ENCODE measurements at regions of chr3 and their contacts with region 1.

Region 1: GRCh38 chr3:9302425-9303181 is 53.2 kb upstream of the SRGAP3 start:
- DNase-seq: peak; percentile 52 to 88 (median 75)
- ATAC-seq: peak; percentile 92 to 98 (median 94)
- H3K4me3 ChIP-seq: peak overlapping the region; percentile 23 to 26
- H3K4me3 Mint-ChIP-seq: peak overlapping the region; percentile 21 to 62 (median 51)
- H3K27ac ChIP-seq: no peak overlapping the region
- H3K27ac Mint-ChIP-seq: no peak overlapping the region
- H3K4me1 ChIP-seq: peaks cover 0 to 7% of the 10 kb centered on the region in 2 experiments
- H3K4me1 Mint-ChIP-seq: peaks cover 6 to 10% (median 8%) of the 10 kb centered on the region in 3 donors
- H3K27me3 ChIP-seq: peaks cover 0 to 10% of the 10 kb centered on the region in 2 experiments
- H3K27me3 Mint-ChIP-seq: peaks cover 15 to 19% of the 10 kb centered on the region in 2 donors

Region 2: DNA sequence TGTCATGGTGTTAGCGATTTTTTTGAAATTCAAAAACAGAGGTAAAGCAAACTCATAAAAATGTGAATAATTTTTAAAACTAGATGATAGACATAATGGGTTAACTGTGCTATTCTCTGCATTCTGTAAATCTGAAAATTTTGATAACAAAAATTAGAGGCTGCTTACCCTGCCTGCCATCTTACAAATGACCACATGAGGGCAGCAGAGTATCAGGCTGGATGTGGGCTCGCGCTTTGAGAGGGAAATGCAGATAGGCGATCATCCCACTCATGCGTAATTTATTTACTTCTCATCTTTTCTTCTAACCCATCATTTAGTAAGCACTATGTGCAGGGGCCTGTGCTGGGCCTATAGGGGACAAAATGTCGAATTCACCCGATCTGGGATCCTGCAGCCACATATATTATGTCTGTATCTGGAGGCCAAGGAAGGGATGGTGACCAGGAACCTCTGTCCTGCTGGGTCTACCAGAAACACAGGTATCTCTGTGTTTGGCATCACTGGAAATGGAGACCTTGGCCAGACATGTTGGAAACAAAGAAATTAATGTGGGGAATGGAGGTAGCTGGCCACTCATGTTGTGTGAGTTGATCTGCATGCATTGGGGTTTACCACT is 331.5 kb before region 1 on chr3:
- CTCF ChIA-PET with region 1: interaction called, 31 to 52 read pairs
- POLR2A ChIA-PET with region 1: interaction called in 1 of 2 experiments, 3 read pairs
- DNase-seq: peak; percentile 38 to 87 (median 64)
- ATAC-seq: peak; percentile 76 to 87 (median 84)
- H3K4me3 ChIP-seq: no peak overlapping the region
- H3K4me3 Mint-ChIP-seq: no peak overlapping the region
- H3K27ac ChIP-seq: no peak overlapping the region
- H3K27ac Mint-ChIP-seq: no peak overlapping the region
- H3K4me1 ChIP-seq: peaks cover 0 to 4% of the 10 kb centered on the region in 2 experiments
- H3K4me1 Mint-ChIP-seq: peaks cover 2 to 4% (median 4%) of the 10 kb centered on the region in 3 donors
- H3K27me3 ChIP-seq: peaks cover 0 to 21% of the 10 kb centered on the region in 2 experiments
- H3K27me3 Mint-ChIP-seq: peaks cover 10 to 20% of the 10 kb centered on the region in 2 donors

Region 3: GRCh38 chr3:8987645-8988383 is 314.8 kb before region 1 on chr3:
- CTCF ChIA-PET with region 1: interaction called, 8 to 21 read pairs
- POLR2A ChIA-PET with region 1: no interaction called
- DNase-seq: peak in 32 of 35 experiments; percentile 21 to 75 (median 50)
- ATAC-seq: peak in 3 of 4 experiments; percentile 83 to 90 (median 84)
- H3K4me3 ChIP-seq: no peak overlapping the region
- H3K4me3 Mint-ChIP-seq: peak overlapping the region in 2 of 3 donors; percentile 17 to 18
- H3K27ac ChIP-seq: no peak overlapping the region
- H3K27ac Mint-ChIP-seq: no peak overlapping the region
- H3K4me1 ChIP-seq: peaks cover 0 to 3% of the 10 kb centered on the region in 2 experiments
- H3K4me1 Mint-ChIP-seq: peaks cover 0 to 4% (median 1%) of the 10 kb centered on the region in 3 donors
- H3K27me3 ChIP-seq: peaks cover 0 to 5% of the 10 kb centered on the region in 2 experiments
- H3K27me3 Mint-ChIP-seq: no peaks in the 10 kb centered on the region

Region 4: GRCh38 chr3:9266716-9267115 is 35.9 kb before region 1 on chr3:
- CTCF ChIA-PET with region 1: no interaction called
- POLR2A ChIA-PET with region 1: no interaction called
- DNase-seq: no peak
- ATAC-seq: no peak
- H3K4me3 ChIP-seq: no peak overlapping the region
- H3K4me3 Mint-ChIP-seq: no peak overlapping the region
- H3K27ac ChIP-seq: no peak overlapping the region
- H3K27ac Mint-ChIP-seq: no peak overlapping the region
- H3K4me1 ChIP-seq: no peaks in the 10 kb centered on the region
- H3K4me1 Mint-ChIP-seq: peaks cover 0 to 3% (median 3%) of the 10 kb centered on the region in 3 donors
- H3K27me3 ChIP-seq: no peaks in the 10 kb centered on the region
- H3K27me3 Mint-ChIP-seq: no peaks in the 10 kb centered on the region

Region 5: GRCh38 chr3:9876991-9877390 is 574.4 kb after region 1 on chr3:
- CTCF ChIA-PET with region 1: interaction called in 1 of 2 experiments, 12 read pairs
- POLR2A ChIA-PET with region 1: no interaction called
- DNase-seq: no peak
- ATAC-seq: peak in 1 of 4 experiments; percentile 20
- H3K4me3 ChIP-seq: no peak overlapping the region
- H3K4me3 Mint-ChIP-seq: no peak overlapping the region
- H3K27ac ChIP-seq: no peak overlapping the region
- H3K27ac Mint-ChIP-seq: no peak overlapping the region
- H3K4me1 ChIP-seq: no peaks in the 10 kb centered on the region
- H3K4me1 Mint-ChIP-seq: no peaks in the 10 kb centered on the region
- H3K27me3 ChIP-seq: peaks cover 0 to 12% of the 10 kb centered on the region in 2 experiments
- H3K27me3 Mint-ChIP-seq: no peaks in the 10 kb centered on the region

Measured in T-cell (primary cell).